ENCODE measurements at regions of chr10 and their contacts with region 1.

Region 1: GRCh38 chr10:43229208-43230061 is 37.4 kb downstream of the RASGEF1A start:
- DNase-seq: peak in 1 of 2 experiments; percentile 85
- H3K4me3 ChIP-seq: peak overlapping the region; percentile 57 to 76 (median 59)
- H3K27ac ChIP-seq: no peak overlapping the region
- H3K4me1 ChIP-seq: peaks cover 0 to 14% (median 7%) of the 10 kb centered on the region in 4 experiments; a peak in 5 of 7 replicates
- H3K27me3 ChIP-seq: peaks cover 19 to 40% (median 39%) of the 10 kb centered on the region in 4 experiments
- CTCF ChIP-seq: no peak
- EP300 ChIP-seq: no peak
- POLR2A ChIP-seq: no peak
- RAD21 ChIP-seq: no peak

Region 2: DNA sequence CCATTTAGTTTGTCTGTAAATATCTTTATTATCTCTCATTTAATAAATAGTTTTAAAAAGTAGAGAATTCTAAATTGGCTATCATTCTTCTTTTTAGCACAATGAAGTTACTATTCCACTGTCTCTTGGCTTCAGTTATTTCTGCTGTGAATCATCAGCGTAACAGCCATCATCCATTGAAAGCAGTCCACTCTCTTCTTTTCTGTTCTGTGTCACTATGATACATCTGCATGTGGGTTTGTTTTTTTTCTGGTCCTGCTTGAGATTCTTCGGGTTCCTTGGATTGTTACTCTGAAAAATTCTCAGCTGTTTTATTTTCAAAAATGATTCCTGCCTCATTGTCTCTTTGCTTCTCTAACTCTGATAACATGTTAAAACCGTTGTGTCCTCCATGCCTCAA is 38.7 kb before region 1 on chr10:
- CTCF ChIA-PET with region 1: no interaction called
- POLR2A ChIA-PET with region 1: no interaction called
- DNase-seq: no peak
- H3K4me3 ChIP-seq: no peak overlapping the region
- H3K27ac ChIP-seq: no peak overlapping the region
- H3K4me1 ChIP-seq: peaks cover 0 to 3% (median 0%) of the 10 kb centered on the region in 4 experiments; a peak in 2 of 7 replicates
- H3K27me3 ChIP-seq: no peaks in the 10 kb centered on the region
- CTCF ChIP-seq: no peak
- EP300 ChIP-seq: no peak
- POLR2A ChIP-seq: no peak
- RAD21 ChIP-seq: no peak

Region 3: GRCh38 chr10:43214071-43214943 is 15.1 kb before region 1 on chr10:
- CTCF ChIA-PET with region 1: interaction called, 60 read pairs
- POLR2A ChIA-PET with region 1: interaction called, 4 read pairs
- DNase-seq: no peak
- H3K4me3 ChIP-seq: no peak overlapping the region
- H3K27ac ChIP-seq: no peak overlapping the region
- H3K4me1 ChIP-seq: peaks cover 0 to 5% (median 0%) of the 10 kb centered on the region in 4 experiments; a peak in 1 of 7 replicates
- H3K27me3 ChIP-seq: no peaks in the 10 kb centered on the region
- CTCF ChIP-seq: no peak
- EP300 ChIP-seq: no peak
- POLR2A ChIP-seq: no peak
- RAD21 ChIP-seq: no peak

Measured in H1 (cell line).